ENCODE measurements at regions of chr22 and their contacts with region 1.

Region 1: GRCh38 chr22:17057959-17058814 is 26.6 kb upstream of the IL17RA start:
- H3K4me3 Mint-ChIP-seq: no peak overlapping the region
- H3K27ac Mint-ChIP-seq: no peak overlapping the region
- H3K4me1 Mint-ChIP-seq: peaks cover 5% of the 10 kb centered on the region
- H3K27me3 Mint-ChIP-seq: no peaks in the 10 kb centered on the region

Region 2: GRCh38 chr22:16774911-16775500 is 283.2 kb before region 1 on chr22:
- intact Hi-C with region 1: loop called (anchors 10 kb)
- H3K4me3 Mint-ChIP-seq: no peak overlapping the region
- H3K27ac Mint-ChIP-seq: peak overlapping the region; percentile 13
- H3K4me1 Mint-ChIP-seq: peaks cover 10% of the 10 kb centered on the region
- H3K27me3 Mint-ChIP-seq: no peaks in the 10 kb centered on the region

Region 3: DNA sequence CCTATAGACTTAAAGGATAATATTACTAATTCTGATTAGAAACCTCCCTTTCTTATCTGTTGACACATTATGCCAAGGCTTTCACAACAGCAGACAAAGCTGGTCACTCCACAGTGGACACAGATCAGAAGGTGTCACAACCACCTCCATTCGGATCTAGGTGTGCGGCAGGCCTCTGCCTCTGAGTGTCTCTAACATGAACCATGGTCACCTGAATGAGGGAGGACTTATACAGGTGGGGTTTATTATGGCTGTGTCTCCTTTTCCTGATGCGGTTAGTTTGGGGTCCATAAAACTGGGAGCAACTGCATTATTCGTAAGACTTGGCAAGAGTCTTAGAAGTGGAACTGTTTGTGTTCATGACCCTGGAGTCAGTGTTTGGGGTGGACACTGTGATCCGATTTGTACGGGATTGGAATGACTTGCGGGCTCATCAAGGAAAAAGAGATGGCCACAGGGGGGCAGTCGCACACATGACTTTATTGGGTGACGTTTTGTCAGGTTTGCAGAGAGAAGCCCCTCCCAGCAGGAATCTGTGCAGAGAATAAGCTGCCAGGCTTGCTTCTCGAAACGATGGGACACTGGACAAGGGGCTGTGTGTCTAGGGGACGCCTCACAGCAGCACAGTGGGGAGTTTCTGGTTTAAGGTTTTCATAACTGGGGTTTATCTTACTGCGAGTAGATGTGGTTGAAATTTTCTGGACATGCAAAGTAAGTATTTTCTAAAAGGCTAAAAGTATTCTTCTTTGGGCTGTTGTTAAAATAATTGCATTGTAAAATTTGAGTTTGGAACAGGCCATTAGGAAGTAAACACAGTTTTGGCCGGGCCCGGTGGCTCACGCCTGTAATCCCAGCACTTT is 140.8 kb before region 1 on chr22:
- intact Hi-C with region 1: loop called (anchors 1 kb)
- H3K4me3 Mint-ChIP-seq: no peak overlapping the region
- H3K27ac Mint-ChIP-seq: no peak overlapping the region
- H3K4me1 Mint-ChIP-seq: peaks cover 11% of the 10 kb centered on the region
- H3K27me3 Mint-ChIP-seq: peaks cover 3% of the 10 kb centered on the region

Region 4: DNA sequence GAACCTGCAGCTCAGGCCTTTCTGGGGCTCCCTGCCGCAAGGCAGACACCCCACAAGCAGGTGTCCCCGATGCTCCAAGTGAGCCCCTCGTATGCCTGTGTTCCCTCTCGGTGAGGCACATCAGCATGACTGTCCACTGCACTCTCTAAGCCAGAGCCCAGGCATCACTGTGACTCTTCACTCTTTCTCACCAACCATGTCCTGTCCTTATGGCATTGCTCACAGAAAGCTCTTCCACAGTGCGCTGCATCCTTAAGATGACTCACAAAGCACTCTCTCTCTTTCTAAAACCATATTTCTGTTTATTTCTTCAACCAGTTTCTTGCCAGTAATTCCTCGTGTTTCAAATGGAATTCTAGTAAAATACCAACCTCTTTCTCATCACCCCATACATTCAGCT is 68.3 kb before region 1 on chr22:
- intact Hi-C with region 1: loop called (anchors 10 kb)
- H3K4me3 Mint-ChIP-seq: no peak overlapping the region
- H3K27ac Mint-ChIP-seq: no peak overlapping the region
- H3K4me1 Mint-ChIP-seq: peaks cover 7% of the 10 kb centered on the region
- H3K27me3 Mint-ChIP-seq: no peaks in the 10 kb centered on the region

Measured in dendritic cell treated with granulocyte-macrophage colony-stimulating factor and Interleukin-4, amounts not matched to agents 40 ng/mL and 50 ng/mL, for 4 days (primary cell).